ENCODE measurements at regions of chr7 and their contacts with region 1.

Region 1: DNA sequence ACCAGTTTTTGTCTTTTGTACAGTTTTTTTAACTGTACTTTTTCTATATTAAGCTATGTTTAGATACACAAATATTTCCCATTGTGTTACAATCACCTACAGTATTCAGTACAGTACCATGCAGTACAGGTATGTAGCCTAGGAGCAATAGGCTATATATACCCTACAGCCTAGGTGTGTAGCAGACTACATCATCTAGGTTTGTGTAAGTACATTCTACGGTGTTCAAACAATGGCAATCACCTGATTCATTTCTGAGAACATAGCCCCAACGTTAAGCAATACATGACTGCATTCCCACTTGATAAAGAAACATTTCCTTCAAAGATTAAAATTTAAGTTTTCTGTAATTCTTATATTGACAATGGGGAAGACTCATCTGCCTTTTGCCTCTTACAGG is 89.4 kb downstream of the TRIL start:
- DNase-seq: no peak
- CTCF ChIP-seq: no peak

Region 2: GRCh38 chr7:28840592-28840995 is 28.1 kb before region 1 on chr7:
- CTCF ChIA-PET with region 1: no interaction called
- POLR2A ChIA-PET with region 1: no interaction called
- DNase-seq: peak; percentile 34
- CTCF ChIP-seq: peak; percentile 12

Region 3: GRCh38 chr7:28853834-28854749 is 14.6 kb before region 1 on chr7:
- CTCF ChIA-PET with region 1: interaction called, 19 read pairs
- POLR2A ChIA-PET with region 1: no interaction called
- DNase-seq: peak; percentile 92
- CTCF ChIP-seq: peak; percentile 88